Psoas muscle (tissue), 8 donors: ENCODE measurements at regions of chr11 and their contacts with region 1.

Region 1: GRCh38 chr11:117226388-117227385 is 5.2 kb downstream of the PCSK7 start:
- DNase-seq: no peak
- ATAC-seq: peak; percentile 75 to 84 (median 82)
- H3K4me3 ChIP-seq: no peak overlapping the region
- H3K27ac ChIP-seq: no peak overlapping the region
- H3K4me1 ChIP-seq: peaks cover 29% of the 10 kb centered on the region
- H3K27me3 ChIP-seq: no peaks in the 10 kb centered on the region
- CTCF ChIP-seq: peak; percentile 87

Region 2: DNA sequence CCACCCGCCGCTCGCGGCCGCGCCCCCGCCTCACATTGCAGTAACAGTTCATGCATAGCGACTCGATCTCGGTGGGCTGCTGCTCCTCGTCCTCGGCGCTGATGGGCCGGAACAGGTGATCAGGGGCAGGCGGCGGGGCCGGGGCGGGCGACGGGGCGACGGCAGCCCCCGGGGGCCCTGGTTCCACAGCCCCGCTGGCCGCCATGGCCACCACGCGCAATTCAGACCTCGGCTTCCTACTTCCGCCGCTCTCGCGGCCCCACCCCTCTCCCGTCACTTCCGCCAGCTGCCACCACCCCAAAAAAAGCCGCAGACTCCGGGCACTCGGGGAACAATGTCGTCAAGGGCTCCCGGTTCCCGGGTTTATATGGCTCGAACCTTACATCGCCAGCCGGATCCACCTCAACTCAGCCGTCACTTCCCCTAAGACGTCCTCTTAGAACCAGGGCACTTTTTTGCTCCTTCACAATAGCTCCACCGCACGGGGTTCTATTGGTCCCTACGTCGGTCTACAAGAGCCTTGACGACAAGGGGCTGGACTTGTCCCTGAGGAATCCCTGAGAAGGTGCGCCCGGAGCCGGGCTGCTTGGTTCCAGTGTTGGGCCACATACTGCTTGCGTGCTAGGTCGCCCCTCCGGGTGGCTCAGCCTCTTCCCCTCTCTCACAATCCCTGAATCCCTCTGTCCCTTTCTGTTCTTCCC is 438.8 kb before region 1 on chr11 and contains the start of gene ZPR1:
- intact Hi-C with region 1: loop called in 1 of 2 experiments (anchors 5 kb)
- DNase-seq: peak; percentile 84 to 93
- ATAC-seq: peak; percentile 83 to 95 (median 89)
- H3K4me3 ChIP-seq: peak within 1 kb of the TSS; percentile 98
- H3K27ac ChIP-seq: peak within 1 kb of the TSS; percentile 87
- H3K4me1 ChIP-seq: peaks cover 10% of the 10 kb centered on the region
- H3K27me3 ChIP-seq: no peaks in the 10 kb centered on the region
- CTCF ChIP-seq: no peak
- total RNA-seq, gene ZPR1: 41.4 to 63.2 (median 56.1) TPM

Region 3: DNA sequence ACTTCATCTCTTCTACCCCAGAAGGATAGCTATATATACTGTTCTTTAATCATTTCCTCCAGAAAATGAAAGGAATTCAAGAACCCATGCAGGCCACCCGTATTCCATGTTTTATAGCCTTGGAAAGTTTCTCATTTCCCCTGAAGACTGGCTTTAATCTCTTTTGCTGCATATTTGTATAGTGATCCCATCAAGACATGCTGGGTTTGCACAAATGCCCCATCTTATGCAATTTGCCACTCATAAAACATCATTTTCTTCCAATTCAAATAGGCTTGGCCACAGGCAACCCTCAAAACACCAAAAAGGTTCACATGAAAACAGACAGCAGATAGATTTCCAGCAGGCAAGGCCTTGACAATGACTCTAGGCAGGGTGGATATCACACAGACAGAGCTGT is 361.0 kb before region 1 on chr11:
- intact Hi-C with region 1: loop called in 1 of 2 experiments (anchors 5 kb)
- DNase-seq: no peak
- ATAC-seq: no peak
- H3K4me3 ChIP-seq: no peak overlapping the region
- H3K27ac ChIP-seq: no peak overlapping the region
- H3K4me1 ChIP-seq: peaks cover 29% of the 10 kb centered on the region
- H3K27me3 ChIP-seq: no peaks in the 10 kb centered on the region
- CTCF ChIP-seq: no peak

Region 4: DNA sequence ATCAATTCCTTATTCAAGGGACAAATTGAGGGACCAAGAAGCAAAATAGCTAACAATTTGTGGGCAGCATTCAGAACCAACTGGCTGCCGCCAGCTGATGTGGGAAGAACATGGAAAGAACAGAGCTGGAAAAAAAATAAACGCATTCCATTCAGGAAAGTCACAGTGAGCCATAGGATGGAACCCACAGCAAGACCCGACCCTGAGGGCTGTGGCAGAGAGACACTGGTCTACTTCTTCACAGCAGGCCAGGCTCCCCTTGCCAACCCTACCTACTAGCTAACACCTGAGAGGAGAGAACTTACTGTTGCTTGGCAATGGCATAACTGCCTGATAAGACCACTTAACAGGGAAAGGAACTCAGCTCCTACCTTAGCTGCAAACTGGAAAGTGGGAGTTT is 265.8 kb before region 1 on chr11:
- intact Hi-C with region 1: loop called in 1 of 2 experiments (anchors 10 kb)
- DNase-seq: no peak
- ATAC-seq: no peak
- H3K4me3 ChIP-seq: no peak overlapping the region
- H3K27ac ChIP-seq: no peak overlapping the region
- H3K4me1 ChIP-seq: peaks cover 51% of the 10 kb centered on the region
- H3K27me3 ChIP-seq: no peaks in the 10 kb centered on the region
- CTCF ChIP-seq: no peak

Region 5: GRCh38 chr11:117107701-117108590 is 118.7 kb before region 1 on chr11:
- intact Hi-C with region 1: loop called (anchors 5 to 10 kb)
- DNase-seq: no peak
- ATAC-seq: no peak
- H3K4me3 ChIP-seq: no peak overlapping the region
- H3K27ac ChIP-seq: no peak overlapping the region
- H3K4me1 ChIP-seq: peaks cover 3% of the 10 kb centered on the region
- H3K27me3 ChIP-seq: no peaks in the 10 kb centered on the region
- CTCF ChIP-seq: no peak

Region 6: DNA sequence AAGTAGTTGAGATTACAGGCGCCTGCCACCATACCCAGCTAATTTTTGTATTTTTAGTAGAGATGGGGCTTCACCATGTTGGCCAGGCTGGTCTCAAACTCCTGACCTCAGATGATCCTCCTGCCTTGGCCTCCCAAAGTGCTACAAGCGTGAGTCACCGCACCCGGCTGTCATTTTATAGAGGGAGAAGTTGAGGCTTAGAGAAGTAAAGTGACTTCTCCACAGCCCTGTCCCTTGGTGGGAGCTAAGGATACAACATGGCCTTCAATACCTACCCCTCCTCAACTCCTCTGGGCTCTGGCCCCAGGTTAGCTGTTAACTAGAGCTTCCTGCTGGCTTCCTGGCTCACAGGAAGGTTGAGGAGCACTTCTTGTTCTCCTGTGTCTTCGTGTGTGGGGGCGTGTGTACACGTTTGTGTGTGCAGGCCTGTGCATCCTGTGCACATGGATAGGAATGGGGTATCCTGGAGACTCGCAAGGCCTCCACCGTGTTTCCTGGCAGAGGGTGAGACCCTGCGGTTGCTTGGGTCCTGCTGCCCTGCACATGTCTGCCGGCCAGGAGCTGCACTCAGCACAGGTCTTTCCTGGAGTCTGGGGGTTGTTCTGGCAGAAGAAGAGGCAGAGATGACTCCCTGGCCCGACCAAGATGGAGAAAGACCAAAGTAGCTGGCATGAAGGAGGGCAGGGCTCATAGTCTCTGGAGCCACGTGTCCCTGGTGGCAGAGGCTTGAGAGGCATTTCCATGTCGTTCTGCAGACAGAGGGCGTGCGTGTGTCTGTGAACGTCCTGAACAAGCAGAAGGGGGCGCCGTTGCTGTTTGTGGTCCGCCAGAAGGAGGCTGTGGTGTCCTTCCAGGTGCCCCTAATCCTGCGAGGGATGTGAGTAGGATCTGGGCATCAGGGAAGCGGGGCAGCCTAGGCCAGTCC is 45.8 kb before region 1 on chr11:
- intact Hi-C with region 1: loop called in 1 of 2 experiments (anchors 2 kb)
- DNase-seq: peak; percentile 71 to 86
- ATAC-seq: peak; percentile 47 to 67 (median 56)
- H3K4me3 ChIP-seq: peak overlapping the region; percentile 90
- H3K27ac ChIP-seq: no peak overlapping the region
- H3K4me1 ChIP-seq: peaks cover 32% of the 10 kb centered on the region
- H3K27me3 ChIP-seq: no peaks in the 10 kb centered on the region
- CTCF ChIP-seq: peak; percentile 63